H1 (cell line): ENCODE measurements at regions of chr12 and their contacts with region 1.

Region 1: GRCh38 chr12:1093166-1093751 is 102.2 kb downstream of the ERC1 start:
- DNase-seq: no peak
- H3K4me3 ChIP-seq: no peak overlapping the region
- H3K27ac ChIP-seq: no peak overlapping the region
- H3K4me1 ChIP-seq: no peaks in the 10 kb centered on the region
- H3K27me3 ChIP-seq: no peaks in the 10 kb centered on the region
- CTCF ChIP-seq: peak in 2 of 3 experiments; percentile 56 to 75; a peak in 3 of 4 replicates
- EP300 ChIP-seq: no peak
- POLR2A ChIP-seq: no peak
- RAD21 ChIP-seq: peak; percentile 83 to 85

Region 2: GRCh38 chr12:953776-954175 is 139.5 kb before region 1 on chr12:
- CTCF ChIA-PET with region 1: interaction called, 13 read pairs
- POLR2A ChIA-PET with region 1: interaction called, 5 read pairs
- DNase-seq: no peak
- H3K4me3 ChIP-seq: no peak overlapping the region
- H3K27ac ChIP-seq: no peak overlapping the region
- H3K4me1 ChIP-seq: no peaks in the 10 kb centered on the region
- H3K27me3 ChIP-seq: no peaks in the 10 kb centered on the region
- CTCF ChIP-seq: no peak
- EP300 ChIP-seq: no peak
- POLR2A ChIP-seq: no peak
- RAD21 ChIP-seq: no peak

Region 3: DNA sequence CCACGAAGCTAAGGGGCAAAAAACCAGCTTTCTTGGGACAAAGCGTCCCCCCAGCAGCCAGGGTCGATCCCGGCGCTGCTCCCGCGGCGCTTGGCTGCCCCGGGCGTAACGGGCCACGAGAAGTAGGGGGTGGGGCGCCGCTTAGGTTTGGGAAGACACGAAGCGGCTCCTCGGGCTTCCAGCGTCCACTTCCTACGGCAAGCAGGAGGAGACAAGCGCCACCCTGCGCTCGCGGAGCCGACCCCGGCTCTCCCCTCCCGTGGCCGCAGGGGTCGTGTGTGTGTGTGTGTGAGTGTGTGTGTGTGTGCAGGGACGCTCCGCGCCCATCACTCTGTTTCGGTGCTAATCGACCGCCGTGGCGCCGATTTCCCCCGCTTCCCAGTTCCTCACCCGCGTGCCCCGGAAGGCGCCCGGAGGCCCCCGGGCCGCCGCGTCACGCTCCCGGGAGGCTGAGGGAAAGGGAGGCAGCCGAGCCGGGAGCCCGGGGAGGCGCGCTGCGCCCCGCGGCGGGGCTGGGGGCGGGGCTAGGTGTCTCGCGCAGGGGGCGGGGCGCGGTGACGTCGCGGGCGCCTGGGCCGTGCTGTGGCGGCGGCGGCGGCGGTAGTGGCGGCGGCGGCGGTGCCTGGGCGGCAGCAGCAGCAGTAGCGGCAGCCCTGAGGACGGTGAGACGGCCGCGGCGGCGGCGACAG is 102.5 kb before region 1 on chr12 and contains the start of gene ERC1:
- CTCF ChIA-PET with region 1: interaction called, 17 read pairs
- POLR2A ChIA-PET with region 1: interaction called, 4 read pairs
- DNase-seq: peak in 1 of 2 experiments; percentile 91
- H3K4me3 ChIP-seq: peak within 1 kb of the TSS; percentile 77 to 91 (median 84)
- H3K27ac ChIP-seq: peak within 1 kb of the TSS; percentile 61; the same call in 1 of the 2 replicates
- H3K4me1 ChIP-seq: peaks cover 5 to 8% (median 6%) of the 10 kb centered on the region in 4 experiments; a peak in 5 of 7 replicates
- H3K27me3 ChIP-seq: peaks cover 0 to 2% (median 0%) of the 10 kb centered on the region in 4 experiments; a peak in 2 of 7 replicates
- CTCF ChIP-seq: no peak; a peak in 1 of 4 replicates
- EP300 ChIP-seq: peak in 1 of 2 experiments; percentile 0; a peak in 1 of 3 replicates
- POLR2A ChIP-seq: no peak; a peak in 2 of 3 replicates
- RAD21 ChIP-seq: no peak
- total RNA-seq, gene ERC1: 43.3 and 45.7 TPM in 2 replicates

Region 4: GRCh38 chr12:1030779-1031178 is 62.5 kb before region 1 on chr12:
- CTCF ChIA-PET with region 1: interaction called, 10 read pairs
- POLR2A ChIA-PET with region 1: no interaction called
- DNase-seq: no peak
- H3K4me3 ChIP-seq: no peak overlapping the region
- H3K27ac ChIP-seq: no peak overlapping the region
- H3K4me1 ChIP-seq: no peaks in the 10 kb centered on the region
- H3K27me3 ChIP-seq: no peaks in the 10 kb centered on the region
- CTCF ChIP-seq: no peak
- EP300 ChIP-seq: no peak
- POLR2A ChIP-seq: no peak
- RAD21 ChIP-seq: no peak

Region 5: DNA sequence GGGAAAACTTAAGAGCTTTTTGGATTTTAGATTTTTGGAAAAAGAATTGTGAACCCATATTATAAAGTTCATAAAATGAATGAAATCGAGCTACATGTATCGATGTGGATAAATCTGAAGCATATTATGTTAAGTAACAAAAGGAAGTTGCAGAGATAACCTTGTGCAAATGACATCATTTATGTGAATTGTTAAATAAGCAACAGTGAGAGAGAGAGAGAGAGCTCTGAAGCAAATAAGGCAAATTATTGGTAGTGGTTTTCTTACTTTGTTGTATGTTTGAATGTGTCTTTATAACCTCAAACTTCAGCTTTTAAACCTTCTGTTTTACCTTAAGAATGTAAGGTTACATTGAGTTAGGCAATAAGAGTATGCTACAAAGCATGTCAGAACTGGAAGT is 23.4 kb before region 1 on chr12:
- CTCF ChIA-PET with region 1: interaction called, 13 read pairs
- POLR2A ChIA-PET with region 1: no interaction called
- DNase-seq: no peak
- H3K4me3 ChIP-seq: no peak overlapping the region
- H3K27ac ChIP-seq: no peak overlapping the region
- H3K4me1 ChIP-seq: peaks cover 0 to 3% (median 0%) of the 10 kb centered on the region in 4 experiments; a peak in 2 of 7 replicates
- H3K27me3 ChIP-seq: no peaks in the 10 kb centered on the region
- CTCF ChIP-seq: no peak
- EP300 ChIP-seq: no peak
- POLR2A ChIP-seq: no peak
- RAD21 ChIP-seq: no peak

Region 6: GRCh38 chr12:1212526-1212925 is 119.3 kb after region 1 on chr12:
- CTCF ChIA-PET with region 1: no interaction called
- POLR2A ChIA-PET with region 1: no interaction called
- DNase-seq: peak in 1 of 2 experiments; percentile 1
- H3K4me3 ChIP-seq: no peak overlapping the region; a peak in 1 of 8 replicates
- H3K27ac ChIP-seq: no peak overlapping the region
- H3K4me1 ChIP-seq: peaks cover 0 to 8% (median 2%) of the 10 kb centered on the region in 4 experiments; a peak in 4 of 7 replicates
- H3K27me3 ChIP-seq: no peaks in the 10 kb centered on the region
- CTCF ChIP-seq: no peak
- EP300 ChIP-seq: no peak
- POLR2A ChIP-seq: no peak
- RAD21 ChIP-seq: no peak

Region 7: DNA sequence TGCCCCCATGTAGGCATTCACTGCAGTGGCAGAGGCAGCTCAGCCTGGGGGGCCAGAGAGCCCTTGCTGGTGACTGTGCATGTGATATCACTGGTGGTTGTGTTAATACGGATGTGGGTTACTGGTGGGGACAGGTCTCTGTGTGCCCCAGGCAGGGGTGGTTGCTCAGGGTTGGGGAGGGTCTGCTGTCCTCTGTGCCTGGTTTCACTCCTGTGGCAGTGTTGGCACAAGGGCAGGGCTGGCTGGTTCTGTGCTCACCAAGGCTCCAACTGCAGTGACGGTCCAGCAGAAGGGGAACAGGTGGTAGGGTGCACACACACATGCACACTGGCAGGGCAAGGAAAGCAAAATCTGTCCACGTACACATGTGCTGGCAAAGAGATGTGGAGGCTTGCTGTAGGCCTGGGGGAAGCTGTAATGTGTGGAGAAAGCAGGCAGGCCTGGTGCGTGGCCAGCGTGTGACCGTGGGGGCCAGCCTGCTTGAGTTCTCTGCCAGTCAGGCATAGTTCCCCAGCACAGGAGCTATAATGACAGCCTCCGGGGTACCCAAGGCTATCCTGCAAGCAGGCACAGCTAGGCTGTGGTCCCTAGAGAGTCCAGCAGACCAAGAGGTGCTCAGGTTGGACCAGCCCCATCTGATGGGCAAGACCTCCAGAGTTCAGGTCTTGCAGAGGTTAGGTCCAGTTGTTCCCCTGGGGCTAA is 246.5 kb after region 1 on chr12:
- CTCF ChIA-PET with region 1: no interaction called
- POLR2A ChIA-PET with region 1: no interaction called
- DNase-seq: no peak
- H3K4me3 ChIP-seq: no peak overlapping the region
- H3K27ac ChIP-seq: no peak overlapping the region
- H3K4me1 ChIP-seq: no peaks in the 10 kb centered on the region
- H3K27me3 ChIP-seq: no peaks in the 10 kb centered on the region
- CTCF ChIP-seq: no peak
- EP300 ChIP-seq: no peak
- POLR2A ChIP-seq: no peak
- RAD21 ChIP-seq: no peak